Esophagus muscularis mucosa (tissue), 4 donors: ENCODE measurements at regions of chr3 and their contacts with region 1.

Region 1: GRCh38 chr3:132722164-132723024 is at the start of gene NPHP3:
- DNase-seq: peak; percentile 100
- H3K4me3 ChIP-seq: peak within 1 kb of the TSS; percentile 76 to 99 (median 93)
- H3K27ac ChIP-seq: peak within 1 kb of the TSS; percentile 92 to 99 (median 98)
- H3K4me1 ChIP-seq: peaks cover 24 to 51% (median 49%) of the 10 kb centered on the region in 4 donors
- H3K27me3 ChIP-seq: no peaks in the 10 kb centered on the region
- CTCF ChIP-seq: no peak
- EP300 ChIP-seq: no peak
- POLR2A ChIP-seq: peak; percentile 61
- total RNA-seq, gene NPHP3: 22.7 to 31.1 (median 26.4) TPM

Region 2: DNA sequence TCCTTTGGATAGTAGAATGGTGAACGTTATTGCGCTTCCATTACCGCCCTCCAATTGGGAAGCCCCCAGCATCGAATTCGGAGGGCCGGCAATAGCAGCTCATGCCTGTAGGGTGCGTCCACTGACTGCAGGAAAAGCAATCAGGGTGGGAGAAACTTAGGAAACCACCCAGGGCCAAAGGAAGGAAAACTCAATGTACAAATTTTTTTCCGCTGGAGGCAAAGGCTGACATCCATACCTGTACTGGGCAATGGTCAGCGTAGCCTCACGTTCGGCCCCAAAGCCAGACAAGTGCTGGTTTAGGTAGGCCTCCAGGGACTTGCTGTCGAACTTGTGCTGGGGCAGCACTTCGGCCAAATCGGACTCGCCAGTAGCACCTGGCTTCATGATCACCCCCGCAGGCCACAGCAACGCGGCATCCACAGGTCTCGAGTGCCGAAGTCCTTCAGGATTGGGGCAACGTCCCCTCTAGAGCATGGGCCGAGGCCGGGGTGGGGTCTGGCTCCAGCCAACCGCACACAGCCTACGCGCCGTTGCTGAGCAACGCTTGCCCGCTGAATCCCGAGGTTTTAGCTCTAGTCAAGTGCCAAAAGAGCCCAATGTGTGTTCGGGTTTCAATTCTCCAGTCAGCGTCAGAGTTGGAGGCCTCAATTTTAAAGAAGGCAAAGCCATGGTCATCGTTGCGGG is 62.9 kb before region 1 on chr3 and contains the start of gene ACAD11:
- intact Hi-C with region 1: loop called (anchors 5 kb)
- DNase-seq: peak; percentile 93
- H3K4me3 ChIP-seq: peak within 1 kb of the TSS; percentile 76 to 96 (median 86)
- H3K27ac ChIP-seq: peak within 1 kb of the TSS; percentile 90 to 96 (median 92)
- H3K4me1 ChIP-seq: peaks cover 45 to 70% (median 57%) of the 10 kb centered on the region in 4 donors
- H3K27me3 ChIP-seq: no peaks in the 10 kb centered on the region
- CTCF ChIP-seq: peak; percentile 53 to 84 (median 54)
- EP300 ChIP-seq: no peak
- POLR2A ChIP-seq: no peak
- total RNA-seq, gene ACAD11: 14.1 to 26.6 (median 17.2) TPM

Region 3: DNA sequence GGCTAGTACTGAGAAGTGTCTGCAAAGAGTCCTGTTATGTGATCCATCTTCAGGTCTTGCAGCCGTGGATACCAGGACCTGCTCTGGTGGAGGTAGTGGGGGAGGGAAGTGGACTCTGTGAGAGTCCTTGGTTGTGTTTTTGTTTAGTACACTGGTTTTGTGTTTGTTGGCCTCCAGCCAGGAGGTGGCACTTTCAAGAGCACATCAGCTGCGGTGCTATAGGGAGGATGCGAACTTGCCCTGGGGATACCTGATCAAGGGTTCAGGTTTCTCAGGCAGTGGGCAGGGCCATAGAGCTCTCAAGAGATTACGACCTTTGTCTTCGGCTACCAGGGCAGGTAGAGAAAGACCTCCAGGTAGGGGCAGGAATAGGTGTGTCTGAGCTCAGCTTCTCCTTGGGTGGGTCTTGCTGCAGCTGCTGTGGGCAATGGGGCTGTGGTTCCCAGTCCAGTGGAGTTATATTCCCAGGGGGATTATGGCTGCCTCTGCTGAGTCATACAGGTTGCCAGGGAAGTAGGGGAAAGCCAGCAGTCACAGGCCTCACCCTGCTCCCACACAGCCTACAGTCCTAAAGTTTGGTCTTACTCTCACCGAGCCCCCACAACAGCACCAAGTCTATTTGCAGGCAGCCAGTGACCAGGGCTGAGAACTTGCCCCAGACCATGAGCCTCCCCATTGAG is 132.6 kb after region 1 on chr3:
- intact Hi-C with region 1: no loop called
- DNase-seq: no peak
- H3K4me3 ChIP-seq: no peak overlapping the region
- H3K27ac ChIP-seq: no peak overlapping the region
- H3K4me1 ChIP-seq: no peaks in the 10 kb centered on the region
- H3K27me3 ChIP-seq: no peaks in the 10 kb centered on the region
- CTCF ChIP-seq: no peak
- EP300 ChIP-seq: no peak
- POLR2A ChIP-seq: no peak

Region 4: GRCh38 chr3:133573054-133573628 is 850.7 kb after region 1 on chr3:
- intact Hi-C with region 1: loop called (anchors 10 kb)
- DNase-seq: peak; percentile 100
- H3K4me3 ChIP-seq: peak overlapping the region; percentile 66 to 90 (median 84)
- H3K27ac ChIP-seq: peak overlapping the region; percentile 94 to 99 (median 96)
- H3K4me1 ChIP-seq: peaks cover 61 to 71% (median 67%) of the 10 kb centered on the region in 4 donors
- H3K27me3 ChIP-seq: no peaks in the 10 kb centered on the region
- CTCF ChIP-seq: no peak
- EP300 ChIP-seq: no peak
- POLR2A ChIP-seq: peak; percentile 45

Region 5: GRCh38 chr3:133805527-133806475 is 1083.4 kb after region 1 on chr3 and contains the start of gene SRPRB:
- intact Hi-C with region 1: loop called (anchors 10 kb)
- DNase-seq: peak; percentile 97
- H3K4me3 ChIP-seq: peak within 1 kb of the TSS; percentile 71 to 92 (median 86)
- H3K27ac ChIP-seq: peak within 1 kb of the TSS; percentile 66 to 88 (median 70)
- H3K4me1 ChIP-seq: peaks cover 6 to 23% (median 13%) of the 10 kb centered on the region in 4 donors
- H3K27me3 ChIP-seq: no peaks in the 10 kb centered on the region
- CTCF ChIP-seq: no peak
- EP300 ChIP-seq: no peak
- POLR2A ChIP-seq: no peak
- total RNA-seq, gene SRPRB: 11.2 to 28.2 (median 18.5) TPM